AG04449 (cell line): ENCODE measurements at regions of chr13 and their contacts with region 1.

Region 1: GRCh38 chr13:114325729-114326128 is 11.4 kb downstream of the CHAMP1 start:
- DNase-seq: no peak
- H3K4me3 ChIP-seq: no peak overlapping the region
- CTCF ChIP-seq: no peak

Region 2: GRCh38 chr13:114339857-114340534 is 14.3 kb after region 1 on chr13:
- CTCF ChIA-PET with region 1: interaction called, 51 read pairs
- POLR2A ChIA-PET with region 1: no interaction called
- DNase-seq: no peak
- H3K4me3 ChIP-seq: no peak overlapping the region
- CTCF ChIP-seq: peak; percentile 64